Activated naive CD4-positive, alpha-beta T cell treated with anti-CD3 and anti-CD28 coated beads for 36 hours (primary cell): ENCODE measurements at regions of chr9 and their contacts with region 1.

Region 1: DNA sequence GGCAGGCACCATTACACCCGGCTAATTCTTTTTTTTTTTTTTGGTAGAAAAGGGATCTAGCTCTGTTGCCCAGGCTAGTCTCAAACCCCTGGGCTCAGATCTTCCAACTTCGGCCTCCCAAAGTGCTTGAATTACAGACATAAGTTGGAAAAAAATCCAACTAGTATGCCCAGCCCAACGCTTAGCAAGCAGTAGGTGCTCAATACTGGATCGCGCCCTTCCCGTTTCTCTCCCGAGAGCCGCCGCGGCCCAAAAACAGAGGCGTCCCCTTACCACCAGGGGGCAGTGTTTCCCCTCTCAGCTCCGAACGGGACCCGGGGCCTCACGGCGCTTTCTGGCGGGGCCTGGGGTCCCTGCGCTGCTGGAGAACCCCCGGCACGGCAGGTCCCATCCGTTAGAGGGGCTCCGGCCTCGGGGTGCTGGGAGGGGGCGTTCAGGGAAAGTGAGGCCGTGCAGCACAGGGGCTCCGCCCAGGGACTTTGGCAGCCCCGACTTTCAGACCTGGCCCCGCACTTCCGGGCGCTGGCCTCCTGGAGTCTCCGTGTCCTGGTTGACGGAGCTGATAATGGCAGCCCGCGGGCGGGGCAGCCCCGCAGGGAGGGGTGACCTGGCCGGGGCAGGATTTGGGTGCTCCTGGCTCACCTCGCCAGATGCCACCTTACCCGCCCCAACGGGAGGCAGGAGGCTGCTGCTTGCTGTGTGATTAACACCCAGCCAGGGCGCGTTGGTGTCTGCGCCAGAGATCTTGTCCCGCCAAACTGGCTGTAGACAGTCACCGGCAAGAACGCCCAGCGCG is 15.2 kb downstream of the PTGES start:
- DNase-seq: peak; percentile 92
- H3K4me3 Mint-ChIP-seq: peak overlapping the region; percentile 54
- H3K27ac Mint-ChIP-seq: no peak overlapping the region
- H3K4me1 Mint-ChIP-seq: peaks cover 10% of the 10 kb centered on the region
- H3K27me3 Mint-ChIP-seq: no peaks in the 10 kb centered on the region

Region 2: GRCh38 chr9:129726322-129727160 is 11.1 kb before region 1 on chr9:
- CTCF ChIA-PET with region 1: interaction called, 58 read pairs
- intact Hi-C with region 1: no loop called
- DNase-seq: peak; percentile 76
- H3K4me3 Mint-ChIP-seq: peak overlapping the region; percentile 36
- H3K27ac Mint-ChIP-seq: no peak overlapping the region
- H3K4me1 Mint-ChIP-seq: peaks cover 2% of the 10 kb centered on the region
- H3K27me3 Mint-ChIP-seq: no peaks in the 10 kb centered on the region

Region 3: GRCh38 chr9:129749992-129750391 is 12.3 kb after region 1 on chr9:
- CTCF ChIA-PET with region 1: interaction called, 12 read pairs
- intact Hi-C with region 1: no loop called
- DNase-seq: no peak
- H3K4me3 Mint-ChIP-seq: no peak overlapping the region
- H3K27ac Mint-ChIP-seq: no peak overlapping the region
- H3K4me1 Mint-ChIP-seq: peaks cover 8% of the 10 kb centered on the region
- H3K27me3 Mint-ChIP-seq: no peaks in the 10 kb centered on the region

Region 4: DNA sequence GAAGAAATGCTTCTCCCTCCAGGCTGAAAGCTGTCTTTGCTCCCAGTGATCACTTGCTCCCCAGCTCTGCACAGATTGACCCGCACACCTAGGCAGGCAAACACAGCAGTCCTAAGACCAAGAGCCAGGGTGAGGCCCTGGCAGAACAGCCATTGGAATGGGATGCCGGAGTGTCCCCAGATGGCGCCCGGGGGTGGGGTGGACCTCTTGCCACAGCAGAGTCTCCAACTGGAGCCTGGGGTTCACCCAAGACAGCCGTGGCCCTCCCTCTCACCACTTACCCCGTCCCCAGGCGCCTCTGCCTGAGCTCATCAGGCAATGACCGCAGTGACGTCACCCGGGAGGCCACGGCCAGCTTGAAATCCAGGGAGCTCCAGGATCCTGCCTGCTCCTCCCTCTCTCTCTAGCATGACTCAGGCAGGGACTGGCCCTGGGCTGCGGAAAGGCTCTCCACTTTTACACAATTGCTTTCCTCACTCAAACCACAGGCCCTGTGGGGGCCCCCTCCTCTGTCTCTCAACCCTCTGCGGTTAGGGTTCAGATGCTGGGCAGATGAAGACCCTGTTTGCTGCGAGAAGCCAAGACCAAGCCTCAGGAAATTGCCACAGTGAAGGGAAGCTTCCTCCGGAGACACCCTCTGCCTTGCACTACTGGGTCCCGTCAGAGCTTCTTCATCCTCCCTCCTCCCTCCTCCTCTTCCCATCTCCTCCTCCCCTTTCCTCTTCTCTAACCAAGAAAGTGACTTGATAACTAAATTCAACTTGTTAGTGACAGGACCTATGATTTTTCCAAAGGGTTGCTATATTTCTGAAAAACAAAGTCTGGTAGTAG is 39.5 kb after region 1 on chr9:
- CTCF ChIA-PET with region 1: interaction called, 81 read pairs
- intact Hi-C with region 1: no loop called
- DNase-seq: peak; percentile 92
- H3K4me3 Mint-ChIP-seq: no peak overlapping the region
- H3K27ac Mint-ChIP-seq: no peak overlapping the region
- H3K4me1 Mint-ChIP-seq: peaks cover 13% of the 10 kb centered on the region
- H3K27me3 Mint-ChIP-seq: peaks cover 9% of the 10 kb centered on the region

Region 5: DNA sequence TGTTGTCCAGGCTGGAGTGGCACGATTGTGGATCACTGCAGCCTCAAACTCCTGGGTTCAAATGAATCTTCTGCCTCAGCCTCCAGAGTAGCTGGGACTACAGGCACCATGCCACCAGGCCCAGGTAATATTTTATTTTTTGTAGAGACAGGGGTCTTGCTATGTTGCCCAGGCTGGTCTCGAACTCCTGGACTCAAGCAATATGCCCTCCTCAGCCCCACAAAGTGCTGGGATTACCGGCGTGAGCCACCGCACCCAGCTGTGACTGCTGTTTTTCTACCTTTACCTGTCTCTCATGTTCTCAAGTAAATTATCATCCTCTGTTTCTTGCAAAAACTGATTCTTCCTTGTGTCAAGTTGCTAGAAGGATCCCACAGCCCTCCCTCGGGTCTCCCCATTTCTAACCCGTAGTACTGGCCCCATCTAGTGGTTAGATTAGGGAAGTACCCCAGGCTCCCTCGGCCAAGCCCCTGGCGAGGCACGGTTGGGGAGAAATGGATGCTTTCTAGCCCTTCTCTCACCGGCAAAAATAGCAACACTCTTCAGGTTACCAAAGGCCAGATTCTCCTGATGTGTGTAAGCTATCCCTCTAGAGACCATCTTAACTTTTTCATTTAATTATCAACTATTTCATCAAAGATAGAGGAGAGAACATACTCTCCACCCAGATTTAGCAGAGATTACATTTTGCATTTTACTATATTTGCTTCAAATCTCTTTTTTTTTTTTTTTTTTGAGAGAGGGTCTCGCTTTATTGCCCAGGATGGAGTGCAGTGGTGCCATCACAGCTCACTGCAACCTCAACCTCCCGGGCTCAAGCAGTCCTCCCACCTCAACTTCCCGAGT is 46.1 kb after region 1 on chr9:
- CTCF ChIA-PET with region 1: interaction called, 81 read pairs
- intact Hi-C with region 1: loop called (anchors 1 kb)
- DNase-seq: peak; percentile 85
- H3K4me3 Mint-ChIP-seq: no peak overlapping the region
- H3K27ac Mint-ChIP-seq: no peak overlapping the region
- H3K4me1 Mint-ChIP-seq: peaks cover 5% of the 10 kb centered on the region
- H3K27me3 Mint-ChIP-seq: no peaks in the 10 kb centered on the region

Region 6: GRCh38 chr9:130090915-130091314 is 353.2 kb after region 1 on chr9:
- CTCF ChIA-PET with region 1: no interaction called
- intact Hi-C with region 1: loop called (anchors 10 kb)
- DNase-seq: no peak
- H3K4me3 Mint-ChIP-seq: no peak overlapping the region
- H3K27ac Mint-ChIP-seq: no peak overlapping the region
- H3K4me1 Mint-ChIP-seq: peaks cover 2% of the 10 kb centered on the region
- H3K27me3 Mint-ChIP-seq: no peaks in the 10 kb centered on the region

Region 7: GRCh38 chr9:131008909-131009618 is 1271.4 kb after region 1 on chr9 and contains the start of gene LAMC3:
- CTCF ChIA-PET with region 1: no interaction called
- intact Hi-C with region 1: no loop called
- DNase-seq: no peak
- H3K4me3 Mint-ChIP-seq: peak within 1 kb of the TSS; percentile 15
- H3K27ac Mint-ChIP-seq: no peak within 1 kb of the TSS
- H3K4me1 Mint-ChIP-seq: peaks cover 3% of the 10 kb centered on the region
- H3K27me3 Mint-ChIP-seq: peaks cover 23% of the 10 kb centered on the region
- total RNA-seq, gene LAMC3: 0.69 to 0.98 TPM